Right lobe of liver (tissue), 6 donors: ENCODE measurements at regions of chr11 and their contacts with region 1.

Region 1: DNA sequence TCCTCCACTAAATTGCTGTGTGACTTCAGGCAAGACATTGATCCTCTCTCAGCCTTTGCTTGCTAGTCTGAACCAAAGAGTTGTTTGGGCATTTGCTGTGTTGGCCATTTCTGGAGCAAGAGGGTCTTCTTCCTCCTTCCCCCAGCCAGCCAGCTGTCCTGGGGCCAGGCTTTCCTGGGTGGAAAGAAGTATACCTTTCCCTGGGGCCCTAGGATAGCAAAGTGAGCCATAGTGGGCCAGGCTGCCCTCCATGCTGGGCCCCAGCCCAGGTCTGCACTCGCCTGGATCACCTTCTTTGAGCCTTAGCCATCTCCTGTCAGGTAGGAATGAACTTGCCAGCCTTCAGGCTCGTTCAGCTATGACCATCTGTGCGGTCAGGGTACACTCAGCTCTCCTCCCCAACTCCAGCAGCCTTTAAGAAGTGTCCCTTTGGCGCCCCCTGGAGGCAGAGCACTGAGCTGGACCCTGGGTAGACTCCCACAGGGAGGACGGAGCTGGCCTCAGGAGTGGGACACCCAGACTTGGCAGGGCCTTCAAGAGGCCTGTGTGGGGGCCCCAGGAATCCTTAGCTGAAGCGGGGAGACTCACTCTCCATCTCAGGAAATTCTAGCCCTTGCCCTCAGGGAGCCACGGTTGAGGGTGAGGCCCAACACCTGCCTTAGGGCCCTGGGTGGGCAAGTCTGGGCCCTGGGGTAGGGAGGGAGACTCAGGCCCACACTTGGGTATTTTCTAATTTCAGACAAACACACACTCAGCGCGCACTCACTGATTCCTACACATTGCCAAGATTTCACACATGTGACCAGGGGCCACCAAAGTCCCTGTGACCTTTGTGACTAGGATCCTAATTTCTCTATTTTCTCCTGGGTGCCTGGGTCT is 35.6 kb upstream of the TPBGL start:
- DNase-seq: peak; percentile 90 to 93 (median 92)
- ATAC-seq: peak; percentile 74 to 87 (median 82)
- H3K4me3 ChIP-seq: no peak overlapping the region
- H3K27ac ChIP-seq: peak overlapping the region; percentile 5 to 90 (median 68)
- H3K4me1 ChIP-seq: peaks cover 0 to 40% (median 10%) of the 10 kb centered on the region in 4 donors
- H3K27me3 ChIP-seq: no peaks in the 10 kb centered on the region
- CTCF ChIP-seq: peak; percentile 90 to 97 (median 95)
- POLR2A ChIP-seq: no peak

Region 2: DNA sequence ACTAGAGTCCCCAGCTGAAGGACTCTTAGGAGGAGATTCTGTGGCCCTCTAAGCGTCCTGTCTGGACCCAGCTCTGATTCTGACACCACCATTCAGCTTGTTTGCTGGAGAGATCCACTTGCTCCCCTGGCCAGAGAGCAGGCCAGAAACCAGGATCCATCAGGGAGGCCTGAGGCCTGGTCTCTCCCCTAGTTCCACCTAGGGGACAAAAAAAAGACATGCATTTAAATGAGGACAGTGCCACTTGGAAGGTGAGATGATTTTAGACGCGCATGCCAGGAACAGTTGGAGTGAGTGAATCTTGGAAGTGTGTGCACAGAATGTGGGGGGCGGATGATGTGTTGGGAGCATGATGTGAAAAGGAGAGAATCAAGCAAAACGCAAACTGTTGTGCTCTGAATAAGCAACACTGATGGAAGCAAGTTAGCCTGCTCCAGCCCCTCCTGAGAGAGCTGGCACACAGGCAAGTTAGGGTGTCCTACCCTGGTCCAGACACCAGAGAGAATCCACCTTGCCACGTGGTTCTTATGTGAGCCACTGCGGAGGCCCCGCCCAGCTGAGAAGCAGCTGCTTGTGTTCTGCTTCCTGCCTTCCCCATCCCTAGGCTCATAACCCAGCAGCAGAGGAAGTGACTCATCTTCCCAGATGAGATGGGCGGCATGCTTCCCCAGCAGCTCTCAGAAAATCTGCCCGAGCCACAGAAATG is 62.1 kb before region 1 on chr11:
- intact Hi-C with region 1: loop called (anchors 5 kb)
- DNase-seq: peak; percentile 55 to 70 (median 70)
- ATAC-seq: peak; percentile 63 to 81 (median 76)
- H3K4me3 ChIP-seq: no peak overlapping the region
- H3K27ac ChIP-seq: no peak overlapping the region
- H3K4me1 ChIP-seq: peaks cover 0 to 9% (median 0%) of the 10 kb centered on the region in 4 donors
- H3K27me3 ChIP-seq: no peaks in the 10 kb centered on the region
- CTCF ChIP-seq: no peak
- POLR2A ChIP-seq: no peak

Region 3: GRCh38 chr11:75147875-75148263 is 57.1 kb before region 1 on chr11:
- intact Hi-C with region 1: loop called (anchors 5 kb)
- DNase-seq: peak in 1 of 3 donors; percentile 37
- ATAC-seq: peak in 2 of 4 donors; percentile 4
- H3K4me3 ChIP-seq: no peak overlapping the region
- H3K27ac ChIP-seq: no peak overlapping the region
- H3K4me1 ChIP-seq: peaks cover 0 to 24% (median 9%) of the 10 kb centered on the region in 4 donors
- H3K27me3 ChIP-seq: no peaks in the 10 kb centered on the region
- CTCF ChIP-seq: no peak
- POLR2A ChIP-seq: no peak

Region 4: GRCh38 chr11:75167617-75168016 is 37.3 kb before region 1 on chr11:
- intact Hi-C with region 1: loop called in 1 of 2 experiments (anchors 5 kb)
- DNase-seq: peak in 1 of 3 donors; percentile 11
- ATAC-seq: no peak
- H3K4me3 ChIP-seq: no peak overlapping the region
- H3K27ac ChIP-seq: peak overlapping the region in 2 of 3 donors; percentile 71 to 89
- H3K4me1 ChIP-seq: peaks cover 0 to 77% (median 32%) of the 10 kb centered on the region in 4 donors
- H3K27me3 ChIP-seq: no peaks in the 10 kb centered on the region
- CTCF ChIP-seq: no peak
- POLR2A ChIP-seq: no peak

Region 5: GRCh38 chr11:75241036-75241905 is 36.3 kb after region 1 on chr11:
- intact Hi-C with region 1: loop called (anchors 5 kb)
- DNase-seq: peak; percentile 87 to 89 (median 88)
- ATAC-seq: peak; percentile 96 to 99 (median 97)
- H3K4me3 ChIP-seq: peak overlapping the region in 2 of 3 donors; percentile 18 to 41
- H3K27ac ChIP-seq: no peak overlapping the region
- H3K4me1 ChIP-seq: peaks cover 0 to 11% (median 0%) of the 10 kb centered on the region in 4 donors
- H3K27me3 ChIP-seq: peaks cover 0 to 12% of the 10 kb centered on the region in 2 donors
- CTCF ChIP-seq: peak; percentile 86 to 100 (median 94)
- POLR2A ChIP-seq: no peak